ENCODE measurements at regions of chr16 and their contacts with region 1.

Region 1: GRCh38 chr16:84647828-84648594 is at the start of gene KLHL36:
- DNase-seq: peak; percentile 39 to 86 (median 69)
- ATAC-seq: peak; percentile 81
- H3K4me3 ChIP-seq: peak within 1 kb of the TSS; percentile 62
- H3K4me3 Mint-ChIP-seq: peak within 1 kb of the TSS; percentile 96
- H3K27ac ChIP-seq: peak within 1 kb of the TSS; percentile 18 to 62
- H3K27ac Mint-ChIP-seq: peak within 1 kb of the TSS; percentile 93
- H3K4me1 ChIP-seq: peaks cover 49% of the 10 kb centered on the region
- H3K4me1 Mint-ChIP-seq: peaks cover 51% of the 10 kb centered on the region
- H3K27me3 ChIP-seq: no peaks in the 10 kb centered on the region
- H3K27me3 Mint-ChIP-seq: no peaks in the 10 kb centered on the region
- CTCF ChIP-seq: no peak
- total RNA-seq, gene KLHL36: 76.6 to 78.6 TPM

Region 2: DNA sequence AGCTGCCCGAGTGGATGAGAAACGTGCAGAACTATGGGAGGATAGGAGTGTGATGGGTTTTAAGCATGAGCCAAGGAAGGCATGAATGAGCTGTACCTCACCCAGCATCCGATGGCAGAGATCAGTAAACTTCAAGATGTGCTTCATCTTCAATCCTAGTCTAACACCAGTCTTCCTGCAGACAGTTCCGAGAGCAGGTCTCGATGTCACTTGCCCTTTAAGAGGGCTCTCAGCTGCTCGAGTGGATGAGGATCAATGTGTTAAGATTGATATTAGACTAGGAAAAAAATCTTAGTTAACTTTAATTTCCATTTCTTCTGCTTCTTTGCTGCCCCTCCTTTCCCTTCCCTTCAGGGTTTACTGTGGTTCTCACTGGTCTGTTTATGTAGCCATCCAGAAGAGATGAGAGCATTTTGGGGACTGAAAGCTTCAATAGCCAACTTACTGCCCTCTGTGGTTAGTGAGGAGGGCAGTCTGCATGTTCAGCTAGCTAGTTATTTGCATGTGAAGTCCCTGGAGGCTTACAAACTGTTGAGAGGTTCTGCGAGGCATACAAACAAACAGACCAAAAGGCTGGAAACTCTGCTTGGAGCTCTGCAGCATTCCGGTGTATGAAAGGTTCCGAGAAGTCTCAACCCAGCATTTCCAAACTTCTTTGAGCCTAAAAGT is 15.6 kb after region 1 on chr16:
- CTCF ChIA-PET with region 1: no interaction called
- POLR2A ChIA-PET with region 1: interaction called, 11 read pairs
- intact Hi-C with region 1: no loop called
- DNase-seq: no peak
- ATAC-seq: no peak
- H3K4me3 ChIP-seq: no peak overlapping the region
- H3K4me3 Mint-ChIP-seq: no peak overlapping the region
- H3K27ac ChIP-seq: no peak overlapping the region
- H3K27ac Mint-ChIP-seq: no peak overlapping the region
- H3K4me1 ChIP-seq: peaks cover 11% of the 10 kb centered on the region
- H3K4me1 Mint-ChIP-seq: peaks cover 8% of the 10 kb centered on the region
- H3K27me3 ChIP-seq: no peaks in the 10 kb centered on the region
- H3K27me3 Mint-ChIP-seq: no peaks in the 10 kb centered on the region
- CTCF ChIP-seq: no peak

Region 3: GRCh38 chr16:84699712-84700445 is 51.9 kb after region 1 on chr16 and contains the start of gene USP10:
- CTCF ChIA-PET with region 1: no interaction called
- POLR2A ChIA-PET with region 1: interaction called, 13 read pairs
- intact Hi-C with region 1: no loop called
- DNase-seq: peak; percentile 67 to 95 (median 81)
- ATAC-seq: peak; percentile 83
- H3K4me3 ChIP-seq: peak within 1 kb of the TSS; percentile 83
- H3K4me3 Mint-ChIP-seq: peak within 1 kb of the TSS; percentile 97
- H3K27ac ChIP-seq: peak within 1 kb of the TSS; percentile 61 to 79
- H3K27ac Mint-ChIP-seq: peak within 1 kb of the TSS; percentile 91
- H3K4me1 ChIP-seq: peaks cover 24% of the 10 kb centered on the region
- H3K4me1 Mint-ChIP-seq: peaks cover 41% of the 10 kb centered on the region
- H3K27me3 ChIP-seq: no peaks in the 10 kb centered on the region
- H3K27me3 Mint-ChIP-seq: no peaks in the 10 kb centered on the region
- CTCF ChIP-seq: no peak
- total RNA-seq, gene USP10: 99.3 to 106 TPM